Uterus (tissue), 4 donors: ENCODE measurements at regions of chr14 and their contacts with region 1.

Region 1: DNA sequence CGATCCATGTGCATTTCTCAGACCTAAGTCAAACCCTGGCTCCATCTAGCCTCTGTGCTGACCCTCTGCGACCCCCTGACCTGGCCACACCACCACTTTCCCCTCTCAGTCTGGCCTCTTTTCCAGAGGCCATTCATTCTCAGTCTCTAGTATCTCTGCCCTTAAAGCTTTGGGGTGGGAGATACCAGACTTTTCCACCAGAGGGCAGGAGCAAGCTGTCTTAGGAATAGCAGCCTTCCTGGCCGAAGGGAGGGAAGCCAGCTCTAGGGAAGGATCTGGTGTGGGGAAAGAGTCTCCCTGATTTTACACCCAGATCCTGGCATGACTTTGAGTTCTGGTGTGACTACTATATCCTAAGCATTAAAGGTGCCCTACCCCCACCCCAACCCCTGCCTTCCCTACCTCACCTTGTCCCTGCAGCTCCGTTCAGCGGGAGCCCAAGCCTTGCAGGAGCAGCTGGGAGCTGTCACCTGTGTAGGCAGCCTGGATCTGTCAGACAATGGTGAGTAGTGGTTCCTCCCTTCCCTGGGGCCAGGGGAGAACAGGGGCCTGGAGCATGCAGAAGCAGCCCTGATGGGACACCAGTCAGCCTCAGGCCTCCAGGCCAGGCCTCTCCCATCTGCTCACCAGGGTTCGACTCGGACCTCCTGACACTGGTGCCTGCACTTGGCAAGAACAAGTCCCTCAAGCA is 6.6 kb downstream of the CARMIL3 start:
- DNase-seq: peak; percentile 72 to 75
- H3K4me3 ChIP-seq: no peak overlapping the region
- H3K27ac ChIP-seq: no peak overlapping the region
- H3K4me1 ChIP-seq: no peaks in the 10 kb centered on the region
- H3K27me3 ChIP-seq: no peaks in the 10 kb centered on the region
- CTCF ChIP-seq: peak; percentile 74 to 95 (median 88)
- POLR2A ChIP-seq: no peak

Region 2: DNA sequence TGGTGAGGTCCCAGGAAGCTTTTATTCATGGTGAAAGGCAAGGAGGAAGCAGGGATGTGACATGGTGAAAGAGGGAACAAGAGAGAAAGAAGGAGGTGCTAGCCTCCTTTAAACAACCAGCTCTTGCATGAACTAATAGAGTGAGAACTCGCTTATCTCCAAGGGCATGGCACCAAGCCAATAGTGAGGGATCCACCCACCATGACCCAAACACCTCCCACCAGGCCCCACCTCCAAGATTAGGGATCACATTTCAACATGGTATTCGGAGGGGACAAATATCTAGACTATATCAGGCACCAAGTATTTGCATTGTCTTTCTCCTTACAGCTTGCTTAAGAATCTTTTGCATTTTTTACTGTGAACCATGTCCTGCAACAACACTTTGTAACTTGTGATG is 196.7 kb before region 1 on chr14:
- intact Hi-C with region 1: no loop called
- DNase-seq: no peak
- H3K4me3 ChIP-seq: no peak overlapping the region
- H3K27ac ChIP-seq: no peak overlapping the region
- H3K4me1 ChIP-seq: no peaks in the 10 kb centered on the region
- H3K27me3 ChIP-seq: no peaks in the 10 kb centered on the region
- CTCF ChIP-seq: no peak
- POLR2A ChIP-seq: no peak

Region 3: GRCh38 chr14:24093901-24094761 is 35.7 kb after region 1 on chr14 and contains the start of gene PCK2:
- intact Hi-C with region 1: loop called (anchors 5 kb)
- DNase-seq: peak; percentile 88 to 93
- H3K4me3 ChIP-seq: peak within 1 kb of the TSS; percentile 71 to 84
- H3K27ac ChIP-seq: peak within 1 kb of the TSS; percentile 84 to 93
- H3K4me1 ChIP-seq: peaks cover 0 to 8% of the 10 kb centered on the region in 2 donors
- H3K27me3 ChIP-seq: no peaks in the 10 kb centered on the region
- CTCF ChIP-seq: peak in 1 of 4 experiments; percentile 17
- POLR2A ChIP-seq: peak in 1 of 2 donors; percentile 61
- total RNA-seq, gene PCK2: 13.1 to 19.4 (median 15.1) TPM in 3 of 4 donors, not detected in the other